ENCODE measurements at regions of chr1 and their contacts with region 1.

Region 1: GRCh38 chr1:16960560-16961296 is 19.7 kb downstream of the MFAP2 start:
- DNase-seq: peak; percentile 88 to 89 (median 89)
- ATAC-seq: peak; percentile 86 to 91 (median 90)
- H3K4me3 ChIP-seq: peak overlapping the region in 2 of 3 donors; percentile 23 to 44
- H3K27ac ChIP-seq: no peak overlapping the region
- H3K4me1 ChIP-seq: peaks cover 0 to 7% (median 0%) of the 10 kb centered on the region in 4 donors
- H3K27me3 ChIP-seq: no peaks in the 10 kb centered on the region
- CTCF ChIP-seq: peak; percentile 71 to 78 (median 72)
- POLR2A ChIP-seq: no peak

Region 2: DNA sequence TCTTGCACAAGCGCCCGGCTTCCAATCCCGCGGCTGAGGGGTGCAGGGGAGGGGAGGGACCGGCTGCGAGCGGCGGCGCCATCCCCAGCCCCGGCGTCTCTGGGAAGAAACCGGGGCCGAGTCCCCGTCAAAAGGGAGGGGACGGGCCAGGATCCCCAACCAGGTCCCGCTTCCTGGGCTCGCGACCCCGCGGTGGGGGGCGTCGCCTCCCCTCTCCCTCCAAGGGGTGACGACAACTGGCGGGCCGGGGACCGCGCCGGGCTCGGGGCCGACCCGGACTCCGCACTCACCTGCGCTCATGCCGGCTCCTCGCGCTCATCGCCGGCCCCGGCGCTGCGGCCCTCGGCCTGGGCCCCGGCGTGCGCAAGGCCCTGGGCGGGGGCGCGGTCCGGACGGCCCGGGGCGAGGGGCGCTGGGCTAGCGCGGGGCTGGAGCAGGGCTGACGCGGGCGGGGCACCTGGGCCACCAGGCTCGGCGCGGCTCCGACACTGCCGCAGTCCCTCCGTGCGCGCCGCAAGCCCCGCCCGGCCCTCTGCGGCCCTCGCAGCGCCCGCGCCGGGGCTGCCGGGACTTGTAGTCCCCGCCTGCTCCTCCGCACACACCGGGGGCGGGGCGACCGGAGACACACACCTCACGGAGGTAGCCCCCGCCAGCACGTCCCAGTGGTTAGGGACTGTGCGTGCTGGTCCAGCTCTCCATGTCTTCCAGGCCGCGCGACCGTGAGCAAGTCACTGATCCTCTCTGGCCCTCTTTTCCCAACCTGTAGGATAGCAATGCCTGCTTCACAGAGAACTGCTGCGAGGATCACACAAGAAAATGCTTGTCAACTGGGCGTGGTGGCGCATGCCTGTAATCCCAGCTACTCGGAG is 50.9 kb after region 1 on chr1 and contains the start of gene ATP13A2:
- intact Hi-C with region 1: loop called in 1 of 2 experiments (anchors 10 kb)
- DNase-seq: peak; percentile 86 to 88 (median 88)
- ATAC-seq: peak; percentile 94 to 97 (median 95)
- H3K4me3 ChIP-seq: peak within 1 kb of the TSS; percentile 68 to 80 (median 75)
- H3K27ac ChIP-seq: peak within 1 kb of the TSS in 1 of 3 donors; percentile 37
- H3K4me1 ChIP-seq: peaks cover 0 to 21% (median 4%) of the 10 kb centered on the region in 4 donors
- H3K27me3 ChIP-seq: no peaks in the 10 kb centered on the region
- CTCF ChIP-seq: no peak
- POLR2A ChIP-seq: peak; percentile 56
- total RNA-seq, gene ATP13A2: 5.0 to 12.5 (median 9.2) TPM

Region 3: DNA sequence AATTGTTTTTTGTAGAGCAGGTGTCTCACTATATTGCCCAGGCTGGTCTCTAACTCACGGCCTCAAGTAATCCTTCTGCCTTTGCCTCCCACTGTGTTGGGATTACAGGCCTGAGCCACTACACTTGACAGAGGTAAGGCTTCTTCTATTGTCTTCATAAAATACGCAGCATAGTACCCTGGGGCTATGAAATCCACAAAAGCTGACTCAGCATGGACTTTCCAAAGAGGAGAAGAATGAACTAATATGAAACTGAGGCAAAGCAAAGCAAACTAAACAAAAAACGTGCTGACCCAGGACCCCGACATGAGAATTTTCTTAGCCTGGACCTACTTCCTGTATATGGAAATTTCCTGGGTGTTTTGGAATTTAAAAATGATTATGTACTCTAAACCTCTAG is 69.5 kb after region 1 on chr1:
- intact Hi-C with region 1: loop called in 1 of 2 experiments (anchors 10 kb)
- DNase-seq: no peak
- ATAC-seq: peak in 1 of 4 donors; percentile 36
- H3K4me3 ChIP-seq: no peak overlapping the region
- H3K27ac ChIP-seq: no peak overlapping the region
- H3K4me1 ChIP-seq: peaks cover 0 to 6% (median 2%) of the 10 kb centered on the region in 4 donors
- H3K27me3 ChIP-seq: no peaks in the 10 kb centered on the region
- CTCF ChIP-seq: no peak
- POLR2A ChIP-seq: no peak

Region 4: GRCh38 chr1:17244816-17245740 is 284.4 kb after region 1 on chr1:
- intact Hi-C with region 1: no loop called
- DNase-seq: peak in 1 of 3 donors; percentile 43
- ATAC-seq: peak in 2 of 4 donors; percentile 23 to 86
- H3K4me3 ChIP-seq: no peak overlapping the region
- H3K27ac ChIP-seq: no peak overlapping the region
- H3K4me1 ChIP-seq: no peaks in the 10 kb centered on the region
- H3K27me3 ChIP-seq: no peaks in the 10 kb centered on the region
- CTCF ChIP-seq: no peak
- POLR2A ChIP-seq: no peak

Measured in right lobe of liver (tissue), 6 donors.